ENCODE measurements at regions of chr19 and their contacts with region 1.

Region 1: GRCh38 chr19:17305517-17306284 is at the start of gene MRPL34:
- DNase-seq: peak; percentile 98
- H3K4me3 Mint-ChIP-seq: peak within 1 kb of the TSS; percentile 89
- H3K27ac Mint-ChIP-seq: peak within 1 kb of the TSS; percentile 90
- H3K4me1 Mint-ChIP-seq: peaks cover 58% of the 10 kb centered on the region
- H3K27me3 Mint-ChIP-seq: no peaks in the 10 kb centered on the region
- total RNA-seq, gene MRPL34: 82.8 to 98.3 TPM

Region 2: GRCh38 chr19:17266975-17267788 is 38.5 kb before region 1 on chr19 and contains the start of gene BABAM1:
- CTCF ChIA-PET with region 1: interaction called, 14 read pairs
- POLR2A ChIA-PET with region 1: interaction called, 7 read pairs
- DNase-seq: peak; percentile 97
- H3K4me3 Mint-ChIP-seq: peak within 1 kb of the TSS; percentile 85
- H3K27ac Mint-ChIP-seq: peak within 1 kb of the TSS; percentile 47
- H3K4me1 Mint-ChIP-seq: peaks cover 31% of the 10 kb centered on the region
- H3K27me3 Mint-ChIP-seq: no peaks in the 10 kb centered on the region
- total RNA-seq, gene BABAM1: 98.5 to 100 TPM

Region 3: DNA sequence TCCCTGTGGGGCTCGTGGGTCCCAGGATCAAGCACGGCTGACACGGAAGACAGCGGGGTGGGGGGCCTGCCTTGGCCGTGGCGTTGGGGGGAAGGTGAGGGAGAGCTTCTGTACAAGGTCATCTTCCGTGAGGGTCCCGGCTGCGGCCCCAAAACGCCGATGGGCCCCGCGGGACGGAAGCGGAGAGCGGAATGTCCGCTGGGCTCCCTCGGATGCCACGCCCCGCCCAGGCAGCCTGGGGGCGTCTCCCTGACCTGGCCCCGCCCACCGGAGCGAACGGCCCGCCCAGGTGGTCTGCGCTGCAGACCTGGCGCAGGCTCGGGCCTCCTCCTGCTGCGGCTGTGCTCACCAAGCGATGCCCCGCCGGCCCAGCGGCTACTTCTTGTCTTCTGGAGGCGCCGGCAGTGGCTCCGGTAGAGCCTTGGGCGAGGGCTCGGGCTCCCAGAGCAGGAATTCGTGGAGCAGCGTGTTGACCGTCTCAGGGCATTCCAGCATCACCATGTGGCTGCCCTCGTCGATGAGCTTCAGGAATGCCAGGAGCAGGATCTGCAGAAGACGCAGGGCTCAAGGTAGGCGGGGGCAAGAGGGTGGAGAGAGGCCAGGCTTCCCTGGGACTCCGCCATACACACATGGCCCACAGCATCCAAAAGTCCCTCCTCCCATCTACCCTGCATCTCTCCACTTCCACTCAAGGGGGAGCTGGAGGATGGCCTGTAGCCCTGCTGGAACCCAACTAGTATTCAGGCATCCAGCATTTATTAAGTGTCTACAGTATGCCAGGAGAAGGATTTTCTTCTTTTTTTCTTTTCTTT is 13.2 kb before region 1 on chr19:
- CTCF ChIA-PET with region 1: interaction called, 9 read pairs
- POLR2A ChIA-PET with region 1: interaction called, 13 read pairs
- DNase-seq: peak; percentile 82
- H3K4me3 Mint-ChIP-seq: peak overlapping the region; percentile 83
- H3K27ac Mint-ChIP-seq: peak overlapping the region; percentile 40
- H3K4me1 Mint-ChIP-seq: peaks cover 15% of the 10 kb centered on the region
- H3K27me3 Mint-ChIP-seq: peaks cover 3% of the 10 kb centered on the region

Region 4: DNA sequence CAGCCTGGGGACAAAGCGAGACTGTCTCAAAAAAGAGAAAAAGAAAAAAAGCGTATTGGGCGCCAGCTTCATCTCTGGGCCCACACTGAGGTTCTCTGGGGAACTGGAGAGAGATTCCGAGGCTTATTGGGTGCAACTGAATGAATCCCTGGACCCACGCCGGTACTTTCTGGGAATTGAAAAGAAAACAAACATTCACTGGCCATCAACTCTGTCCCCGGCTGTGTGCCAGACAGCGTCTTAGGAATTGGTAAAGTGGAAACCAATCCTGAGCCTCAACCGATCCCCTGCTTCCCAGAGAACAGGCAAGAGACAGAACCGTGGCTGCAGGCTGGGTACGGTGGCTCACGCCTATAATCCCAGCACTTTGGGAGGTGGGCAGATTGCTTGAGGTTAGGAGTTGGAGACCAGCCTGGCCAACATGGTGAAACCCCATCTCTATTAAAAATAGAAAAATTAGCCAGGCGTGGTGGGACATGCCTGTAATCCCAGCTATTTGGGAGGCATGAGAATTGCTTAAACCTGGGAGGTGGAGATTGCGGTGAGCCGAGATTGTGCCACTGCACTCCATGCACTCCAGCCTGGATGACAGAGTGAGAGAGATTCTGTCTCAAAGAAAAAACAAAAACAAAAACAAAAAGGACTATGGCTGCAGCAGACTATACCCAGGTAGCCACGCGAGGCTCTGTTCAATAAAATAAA is 20.3 kb after region 1 on chr19:
- CTCF ChIA-PET with region 1: interaction called, 3 read pairs
- POLR2A ChIA-PET with region 1: interaction called, 47 read pairs
- DNase-seq: no peak
- H3K4me3 Mint-ChIP-seq: no peak overlapping the region
- H3K27ac Mint-ChIP-seq: no peak overlapping the region
- H3K4me1 Mint-ChIP-seq: peaks cover 17% of the 10 kb centered on the region
- H3K27me3 Mint-ChIP-seq: peaks cover 15% of the 10 kb centered on the region

Region 5: DNA sequence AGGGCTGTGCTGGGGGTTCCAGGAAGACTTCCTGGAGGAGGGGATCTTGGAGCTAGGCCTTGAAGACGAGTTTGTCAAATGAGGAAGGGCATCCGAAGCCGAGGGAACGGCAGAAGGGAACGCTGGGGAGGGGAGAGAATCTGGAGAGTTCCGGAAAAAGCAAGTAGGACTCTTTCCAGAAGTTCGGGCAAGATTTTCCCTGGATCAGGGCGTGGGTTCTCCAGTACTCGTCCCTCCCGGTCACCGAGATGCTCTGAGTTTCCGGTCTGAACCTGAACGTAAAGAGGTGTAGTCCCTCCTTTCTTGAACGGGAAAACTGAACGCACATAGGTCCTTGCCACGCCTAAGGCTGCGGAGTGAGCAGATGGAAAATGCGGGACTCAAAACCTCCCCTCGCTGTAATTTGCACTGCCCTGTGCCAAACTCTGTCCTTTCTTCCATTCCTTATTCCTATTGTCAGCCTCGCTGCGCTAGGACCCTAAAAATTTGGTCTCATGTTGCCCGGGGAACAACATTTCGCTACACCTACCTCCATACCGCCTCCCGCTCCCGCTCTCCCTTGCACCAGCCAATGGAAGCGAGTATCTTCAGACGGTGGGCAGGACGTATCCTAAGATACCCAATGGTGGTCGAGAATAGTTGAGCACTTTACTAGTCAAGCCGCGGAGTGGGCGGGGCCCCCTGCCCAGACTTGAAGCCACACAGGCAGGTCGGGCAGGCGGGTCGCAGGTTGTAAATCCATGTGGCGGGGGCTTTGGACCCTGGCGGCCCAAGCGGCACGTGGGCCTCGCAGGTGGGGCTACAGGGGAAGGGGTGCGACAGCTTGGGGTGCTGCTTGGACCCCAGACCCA is 31.4 kb after region 1 on chr19 and contains the start of gene GTPBP3:
- CTCF ChIA-PET with region 1: interaction called, 32 read pairs
- POLR2A ChIA-PET with region 1: interaction called, 50 read pairs
- DNase-seq: peak; percentile 98
- H3K4me3 Mint-ChIP-seq: peak within 1 kb of the TSS; percentile 81
- H3K27ac Mint-ChIP-seq: peak within 1 kb of the TSS; percentile 89
- H3K4me1 Mint-ChIP-seq: peaks cover 55% of the 10 kb centered on the region
- H3K27me3 Mint-ChIP-seq: no peaks in the 10 kb centered on the region
- total RNA-seq, gene GTPBP3: 30.2 to 34.2 TPM

Region 6: DNA sequence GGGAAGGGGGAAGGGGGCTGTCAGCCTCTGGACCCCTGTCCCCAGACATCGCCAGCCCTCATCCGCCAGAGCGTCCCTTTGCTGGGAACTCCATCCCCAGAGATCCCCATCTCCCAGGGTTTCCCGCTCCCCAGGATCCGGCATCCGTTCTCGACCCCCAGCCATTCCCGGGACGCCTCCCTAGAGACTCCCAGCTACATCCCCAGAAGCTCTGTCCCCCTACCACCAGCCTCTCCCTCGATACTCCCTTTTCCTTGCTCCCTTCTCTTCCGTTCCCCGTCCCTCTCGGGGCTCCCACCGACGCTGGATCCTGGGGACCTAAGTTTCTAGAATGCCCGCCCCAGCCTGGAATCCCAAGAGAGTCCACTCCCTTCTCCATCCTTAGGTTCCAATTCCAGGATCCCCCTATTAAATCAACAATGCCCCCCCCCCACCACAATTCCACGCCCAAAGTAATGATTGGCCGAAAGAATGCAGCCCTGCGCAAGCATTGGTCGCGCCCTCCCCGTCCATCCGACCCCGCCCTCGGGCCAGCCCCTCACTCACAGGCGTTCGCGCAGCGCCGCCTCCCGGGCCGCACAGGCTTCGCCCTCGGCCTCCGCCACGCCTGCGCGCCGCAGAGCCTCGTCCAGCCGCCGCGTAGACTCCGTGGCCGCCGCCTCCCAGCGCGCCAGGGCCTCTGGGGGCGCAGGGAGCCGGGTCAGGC is 85.1 kb after region 1 on chr19:
- CTCF ChIA-PET with region 1: interaction called, 15 read pairs
- POLR2A ChIA-PET with region 1: interaction called, 5 read pairs
- DNase-seq: peak; percentile 86
- H3K4me3 Mint-ChIP-seq: peak overlapping the region; percentile 76
- H3K27ac Mint-ChIP-seq: no peak overlapping the region
- H3K4me1 Mint-ChIP-seq: peaks cover 27% of the 10 kb centered on the region
- H3K27me3 Mint-ChIP-seq: peaks cover 27% of the 10 kb centered on the region